Aorta (tissue), 5 donors: ENCODE measurements at regions of chr1 and their contacts with region 1.

Region 1: GRCh38 chr1:33181921-33182341 is at the start of gene TRIM62:
- DNase-seq: peak; percentile 89 to 95
- ATAC-seq: peak; percentile 95
- H3K4me3 ChIP-seq: peak within 1 kb of the TSS; percentile 65 to 69
- H3K27ac ChIP-seq: peak within 1 kb of the TSS; percentile 1 to 46
- H3K4me1 ChIP-seq: peaks cover 3 to 4% of the 10 kb centered on the region in 2 donors
- H3K27me3 ChIP-seq: no peaks in the 10 kb centered on the region
- total RNA-seq, gene TRIM62: 5.7 to 8.0 TPM

Region 2: GRCh38 chr1:33127001-33127791 is 54.7 kb before region 1 on chr1:
- intact Hi-C with region 1: loop called in 1 of 2 experiments (anchors 5 kb)
- DNase-seq: peak; percentile 99
- ATAC-seq: peak; percentile 98
- H3K4me3 ChIP-seq: peak overlapping the region; percentile 56 to 58
- H3K27ac ChIP-seq: peak overlapping the region; percentile 49 to 85
- H3K4me1 ChIP-seq: no peaks in the 10 kb centered on the region
- H3K27me3 ChIP-seq: no peaks in the 10 kb centered on the region

Region 3: GRCh38 chr1:33152685-33153432 is 29.1 kb before region 1 on chr1:
- intact Hi-C with region 1: no loop called
- DNase-seq: peak; percentile 79 to 82
- ATAC-seq: peak; percentile 86
- H3K4me3 ChIP-seq: no peak overlapping the region
- H3K27ac ChIP-seq: peak overlapping the region in 1 of 2 donors; percentile 70
- H3K4me1 ChIP-seq: no peaks in the 10 kb centered on the region
- H3K27me3 ChIP-seq: no peaks in the 10 kb centered on the region

Region 4: GRCh38 chr1:33256701-33257399 is 74.9 kb after region 1 on chr1:
- intact Hi-C with region 1: loop called in 1 of 2 experiments (anchors 10 kb)
- DNase-seq: peak; percentile 74 to 84
- ATAC-seq: peak; percentile 65
- H3K4me3 ChIP-seq: peak overlapping the region; percentile 92 to 99
- H3K27ac ChIP-seq: peak overlapping the region; percentile 95 to 99
- H3K4me1 ChIP-seq: peaks cover 0 to 2% of the 10 kb centered on the region in 2 donors
- H3K27me3 ChIP-seq: no peaks in the 10 kb centered on the region